ENCODE measurements at regions of chr7 and their contacts with region 1.

Region 1: DNA sequence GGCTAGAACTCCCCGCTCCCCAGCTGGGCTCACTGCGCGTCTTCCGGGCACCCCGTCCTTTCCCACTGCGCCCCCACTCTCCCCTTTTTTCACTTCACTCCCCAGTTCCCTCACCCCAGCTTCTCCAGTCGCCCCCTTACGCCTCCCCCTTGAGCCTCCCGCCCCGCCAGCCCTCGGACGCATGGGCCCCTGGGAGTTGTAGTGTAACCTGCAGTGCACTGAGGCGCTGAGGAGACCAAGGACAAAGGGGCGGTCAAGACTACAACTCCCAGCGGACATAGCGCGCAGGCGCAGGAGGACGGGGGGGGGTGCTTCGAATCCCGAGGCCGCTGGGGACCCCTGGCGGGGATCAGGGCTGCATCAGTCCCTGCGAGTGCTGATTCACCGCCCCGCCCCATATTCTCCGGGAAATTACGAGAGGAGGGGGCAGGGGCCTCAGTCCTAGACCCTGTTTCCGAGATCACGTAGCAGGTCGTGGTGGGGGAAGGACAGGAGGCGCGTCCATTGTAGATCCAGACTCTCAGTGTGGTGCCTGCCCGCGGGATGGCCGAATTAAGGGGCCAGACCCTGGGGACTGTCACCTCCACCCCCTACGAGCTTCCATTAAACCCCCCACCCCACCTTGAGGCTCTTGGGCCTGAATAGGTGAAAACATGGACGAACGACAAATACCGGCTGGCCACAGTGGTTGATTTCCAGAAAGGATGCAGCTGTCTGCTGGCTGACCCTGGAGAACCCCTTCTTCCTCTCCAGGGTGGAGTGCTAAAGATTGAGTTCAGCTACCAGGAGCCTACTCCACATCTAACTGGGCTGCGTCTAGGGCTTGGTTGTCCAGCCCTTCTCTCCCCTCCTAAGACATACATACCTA is 554 bp upstream of the YWHAG start:
- DNase-seq: peak; percentile 93 to 100 (median 99)

Region 2: DNA sequence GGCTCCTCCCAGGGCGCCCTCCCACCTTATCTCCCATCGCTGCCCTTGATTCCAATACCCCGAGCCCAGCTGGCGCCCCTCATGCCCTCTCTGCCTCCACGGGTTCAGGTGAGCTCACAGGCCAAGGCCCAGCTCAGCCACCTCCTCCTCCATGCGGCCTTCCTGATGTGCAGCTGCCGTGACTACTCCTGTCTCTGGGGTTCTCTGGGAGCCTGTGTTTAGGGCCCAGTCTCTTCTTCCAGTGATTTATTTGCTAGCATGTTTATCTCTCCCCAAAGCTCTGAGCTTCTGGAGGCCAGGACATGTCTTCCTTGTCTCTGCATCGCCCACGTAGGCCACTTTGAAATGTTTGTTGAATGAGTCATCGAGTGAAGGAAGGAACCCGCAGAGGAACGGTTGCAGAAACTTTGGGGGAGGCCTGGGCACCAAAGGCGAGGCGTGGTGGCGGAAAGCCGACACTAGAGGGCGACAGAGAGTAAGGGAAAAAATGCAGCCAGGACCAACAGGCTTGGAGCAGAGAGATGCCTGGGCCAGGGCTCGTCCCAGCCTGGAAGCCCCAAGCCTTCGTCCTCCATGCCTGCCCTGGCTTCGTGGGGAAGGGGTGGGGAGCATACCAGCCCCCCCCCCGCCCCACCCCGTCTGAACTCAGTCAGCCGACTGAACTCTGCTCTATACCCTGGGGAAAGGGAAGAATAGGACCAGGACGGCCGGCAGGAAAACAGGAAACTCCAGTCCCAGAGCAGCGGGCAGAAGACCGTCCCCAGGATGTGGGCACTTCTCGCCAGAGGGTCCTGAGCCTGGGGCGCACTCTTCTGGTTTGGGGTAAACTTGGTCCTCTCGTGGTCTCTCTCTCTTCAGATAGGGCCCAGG is 67.8 kb before region 1 on chr7:
- intact Hi-C with region 1: loop called (anchors 2 kb)
- DNase-seq: peak; percentile 80 to 98 (median 93)

Region 3: GRCh38 chr7:76393116-76394031 is 34.0 kb after region 1 on chr7:
- intact Hi-C with region 1: loop called (anchors 1 kb)
- DNase-seq: peak; percentile 77 to 98 (median 88)

Measured in posterior cingulate gyrus (tissue), 11 donors.